GM12878 (cell line): ENCODE measurements at regions of chr1 and their contacts with region 1.

Region 1: DNA sequence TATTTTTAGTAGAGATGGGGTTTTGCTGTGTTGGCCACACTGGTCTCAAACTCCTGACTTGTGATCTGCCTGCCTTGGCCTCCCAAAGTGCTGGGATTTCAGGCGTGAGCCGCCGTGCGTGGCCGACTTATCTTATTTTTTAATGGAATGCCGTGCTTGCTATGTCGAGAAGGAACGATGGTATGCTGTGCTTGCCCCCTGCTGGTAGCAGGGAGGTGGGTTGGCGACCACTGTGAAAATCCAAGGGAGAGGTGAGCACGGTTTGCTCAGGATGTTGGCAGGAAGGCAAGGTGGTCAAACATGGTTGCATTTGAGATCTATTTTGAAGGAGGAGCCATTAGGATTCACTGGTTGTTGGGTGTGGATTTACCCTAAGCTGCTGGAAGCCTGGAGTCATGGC is 45.8 kb upstream of the RCC2 start:
- DNase-seq: no peak
- ATAC-seq: 0 out of 3 replicates have a peak, but pooled peaks have one; percentile 45
- H3K4me3 ChIP-seq: no peak overlapping the region
- H3K27ac ChIP-seq: no peak overlapping the region
- H3K4me1 ChIP-seq: no peaks in the 10 kb centered on the region
- H3K27me3 ChIP-seq: no peaks in the 10 kb centered on the region
- CTCF ChIP-seq: peak; percentile 32 to 58 (median 42); a peak in 4 of 6 replicates
- EP300 ChIP-seq: no peak
- POLR2A ChIP-seq: no peak
- RAD21 ChIP-seq: peak; percentile 54

Region 2: GRCh38 chr1:17419626-17420328 is 65.5 kb before region 1 on chr1:
- CTCF ChIA-PET with region 1: interaction called, 4 read pairs
- POLR2A ChIA-PET with region 1: no interaction called
- RAD21 ChIA-PET with region 1: no interaction called
- SMC1A ChIA-PET with region 1: interaction called, 5 read pairs
- in situ Hi-C with region 1: no loop called
- intact Hi-C with region 1: loop called (anchors 2 kb)
- DNase-seq: no peak
- ATAC-seq: peak; percentile 89
- H3K4me3 ChIP-seq: no peak overlapping the region
- H3K27ac ChIP-seq: no peak overlapping the region
- H3K4me1 ChIP-seq: no peaks in the 10 kb centered on the region
- H3K27me3 ChIP-seq: no peaks in the 10 kb centered on the region
- CTCF ChIP-seq: peak; percentile 96 to 99 (median 97); a peak in 5 of 6 replicates
- EP300 ChIP-seq: no peak
- POLR2A ChIP-seq: no peak; the same call in 1 of the 2 replicates
- RAD21 ChIP-seq: peak; percentile 83

Region 3: GRCh38 chr1:17617787-17618557 is 132.7 kb after region 1 on chr1:
- CTCF ChIA-PET with region 1: no interaction called
- POLR2A ChIA-PET with region 1: no interaction called
- RAD21 ChIA-PET with region 1: no interaction called
- SMC1A ChIA-PET with region 1: no interaction called
- in situ Hi-C with region 1: no loop called
- intact Hi-C with region 1: no loop called
- DNase-seq: no peak
- ATAC-seq: no peak
- H3K4me3 ChIP-seq: no peak overlapping the region
- H3K27ac ChIP-seq: no peak overlapping the region
- H3K4me1 ChIP-seq: no peaks in the 10 kb centered on the region
- H3K27me3 ChIP-seq: peaks cover 0 to 3% of the 10 kb centered on the region in 2 experiments; a peak in 2 of 4 replicates
- CTCF ChIP-seq: no peak
- EP300 ChIP-seq: no peak
- POLR2A ChIP-seq: no peak
- RAD21 ChIP-seq: no peak